ENCODE measurements at regions of chr20 and their contacts with region 1.

Region 1: GRCh38 chr20:8299921-8300320 is 167.9 kb downstream of the PLCB1 start:
- DNase-seq: no peak
- ATAC-seq: no peak
- H3K4me3 ChIP-seq: no peak overlapping the region
- H3K27ac ChIP-seq: no peak overlapping the region
- H3K4me1 ChIP-seq: peaks cover 22 to 27% of the 10 kb centered on the region in 2 donors
- H3K27me3 ChIP-seq: no peaks in the 10 kb centered on the region
- CTCF ChIP-seq: no peak
- POLR2A ChIP-seq: no peak

Region 2: DNA sequence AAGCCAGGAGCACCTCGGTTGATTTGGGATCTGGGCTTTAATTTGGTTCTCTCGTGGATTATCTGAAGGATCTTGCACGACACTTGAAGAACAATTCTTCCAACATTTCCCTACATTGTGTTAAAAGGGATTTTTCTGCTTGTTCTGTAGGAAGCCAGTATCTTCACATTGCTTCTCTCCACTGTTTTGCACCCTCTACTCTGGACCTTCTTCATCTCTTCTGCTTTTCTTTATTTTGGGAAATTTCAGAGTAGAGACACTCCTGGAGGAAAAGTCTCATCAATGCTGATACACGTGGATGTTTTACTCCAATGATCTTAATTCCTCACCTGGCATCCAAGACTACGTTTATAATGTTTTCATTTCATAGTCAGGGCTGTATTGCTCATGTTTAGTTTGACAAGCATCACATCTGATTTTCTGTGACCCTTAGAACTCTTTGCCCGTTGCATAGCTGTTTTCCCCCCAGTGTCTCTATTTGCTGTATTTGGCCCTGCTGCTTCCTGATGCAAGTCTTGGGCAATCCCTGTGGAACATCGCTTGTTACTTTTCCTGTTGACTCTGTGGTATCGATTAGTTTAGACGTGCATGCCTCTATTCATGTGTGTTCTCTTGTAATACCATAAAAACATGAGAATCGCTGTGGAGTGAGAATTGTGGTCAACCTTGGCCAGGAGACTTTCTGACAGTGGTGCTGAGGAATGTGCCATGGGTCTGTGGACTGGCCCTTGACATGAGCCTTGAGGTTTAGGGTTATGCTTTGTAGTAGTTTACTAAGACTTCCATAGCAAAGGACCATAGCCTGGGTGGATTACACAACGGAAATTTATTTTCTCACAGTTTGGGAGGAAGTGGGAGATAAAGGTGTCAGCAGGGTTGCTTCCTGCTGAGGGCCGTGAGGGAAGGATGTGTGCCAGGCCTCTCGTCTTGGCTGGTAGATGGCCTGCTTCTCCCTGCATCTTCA is 155.4 kb before region 1 on chr20:
- in situ Hi-C with region 1: loop called in 1 of 4 experiments (anchors 5 kb)
- intact Hi-C with region 1: no loop called
- DNase-seq: no peak
- ATAC-seq: no peak
- H3K4me3 ChIP-seq: no peak overlapping the region
- H3K27ac ChIP-seq: no peak overlapping the region
- H3K4me1 ChIP-seq: peaks cover 6 to 10% of the 10 kb centered on the region in 2 donors
- H3K27me3 ChIP-seq: no peaks in the 10 kb centered on the region
- CTCF ChIP-seq: no peak
- POLR2A ChIP-seq: no peak

Region 3: DNA sequence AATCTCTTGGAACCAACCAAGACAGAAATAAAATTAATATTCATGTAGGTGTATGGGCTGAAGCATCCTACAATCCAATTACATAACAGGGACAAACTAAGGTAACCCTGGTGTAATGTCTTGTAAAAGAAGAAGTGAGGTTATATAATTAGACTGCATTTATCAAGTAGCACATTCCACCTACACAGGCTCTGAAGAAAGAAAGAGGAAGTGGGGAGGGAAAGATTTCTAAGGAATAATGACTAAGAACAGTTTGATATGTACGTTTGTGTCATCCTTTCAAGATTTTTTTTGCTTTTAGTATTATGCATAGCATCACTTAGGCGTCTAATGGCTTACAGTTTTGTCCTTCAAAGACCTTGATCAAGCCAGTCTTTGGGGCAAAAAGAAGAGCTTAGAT is 28.2 kb before region 1 on chr20:
- in situ Hi-C with region 1: no loop called
- intact Hi-C with region 1: no loop called
- DNase-seq: no peak
- ATAC-seq: no peak
- H3K4me3 ChIP-seq: no peak overlapping the region
- H3K27ac ChIP-seq: no peak overlapping the region
- H3K4me1 ChIP-seq: peaks cover 0 to 5% of the 10 kb centered on the region in 2 donors
- H3K27me3 ChIP-seq: no peaks in the 10 kb centered on the region
- CTCF ChIP-seq: no peak
- POLR2A ChIP-seq: no peak

Measured in gastrocnemius medialis (tissue), 4 donors.